ENCODE measurements at regions of chr19 and their contacts with region 1.

Region 1: GRCh38 chr19:50476224-50476942 is at the starts of genes EMC10 and GARIN5A:
- DNase-seq: peak; percentile 82 to 98 (median 86)

Region 2: GRCh38 chr19:50398675-50399367 is 77.6 kb before region 1 on chr19:
- intact Hi-C with region 1: no loop called
- DNase-seq: peak in 1 of 10 donors; percentile 36

Region 3: GRCh38 chr19:50511068-50511822 is 34.9 kb after region 1 on chr19 and contains the start of gene JOSD2:
- intact Hi-C with region 1: loop called (anchors 2 kb)
- DNase-seq: peak; percentile 97 to 100 (median 99)

Measured in posterior cingulate gyrus (tissue), 11 donors.